Astrocyte of the cerebellum (primary cell): ENCODE measurements at regions of chr9 and their contacts with region 1.

Region 1: GRCh38 chr9:108543251-108543768 is 312.5 kb downstream of the ACTL7B start:
- DNase-seq: no peak
- H3K4me3 ChIP-seq: no peak overlapping the region
- CTCF ChIP-seq: no peak

Region 2: DNA sequence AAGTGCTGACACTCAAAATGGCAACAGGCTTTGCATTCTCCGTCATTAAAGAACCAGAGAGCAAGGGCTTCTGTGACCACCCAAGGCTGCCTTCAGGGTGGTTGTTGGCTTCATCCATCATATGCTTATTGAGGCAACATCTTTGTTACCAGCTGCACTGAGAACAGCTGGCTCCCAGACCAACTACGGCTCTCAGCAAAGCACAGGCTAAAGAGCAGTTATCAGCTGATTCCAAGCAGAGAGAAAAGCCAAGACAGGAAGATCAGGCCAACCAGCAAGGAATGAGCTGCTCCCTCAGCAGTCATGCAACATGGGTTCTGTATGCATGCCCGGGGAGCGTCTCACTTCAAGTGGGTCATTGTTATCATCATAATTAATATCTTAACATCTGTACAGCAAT is 46.5 kb before region 1 on chr9:
- in situ Hi-C with region 1: loop called (anchors 5 kb)
- DNase-seq: no peak
- H3K4me3 ChIP-seq: no peak overlapping the region
- CTCF ChIP-seq: no peak

Region 3: GRCh38 chr9:108903420-108904103 is 360.3 kb after region 1 on chr9:
- in situ Hi-C with region 1: no loop called
- DNase-seq: no peak
- H3K4me3 ChIP-seq: no peak overlapping the region
- CTCF ChIP-seq: no peak